Activated CD4-positive, alpha-beta memory T cell treated with anti-CD3 and anti-CD28 coated beads for 36 hours (primary cell): ENCODE measurements at regions of chr18 and their contacts with region 1.

Region 1: DNA sequence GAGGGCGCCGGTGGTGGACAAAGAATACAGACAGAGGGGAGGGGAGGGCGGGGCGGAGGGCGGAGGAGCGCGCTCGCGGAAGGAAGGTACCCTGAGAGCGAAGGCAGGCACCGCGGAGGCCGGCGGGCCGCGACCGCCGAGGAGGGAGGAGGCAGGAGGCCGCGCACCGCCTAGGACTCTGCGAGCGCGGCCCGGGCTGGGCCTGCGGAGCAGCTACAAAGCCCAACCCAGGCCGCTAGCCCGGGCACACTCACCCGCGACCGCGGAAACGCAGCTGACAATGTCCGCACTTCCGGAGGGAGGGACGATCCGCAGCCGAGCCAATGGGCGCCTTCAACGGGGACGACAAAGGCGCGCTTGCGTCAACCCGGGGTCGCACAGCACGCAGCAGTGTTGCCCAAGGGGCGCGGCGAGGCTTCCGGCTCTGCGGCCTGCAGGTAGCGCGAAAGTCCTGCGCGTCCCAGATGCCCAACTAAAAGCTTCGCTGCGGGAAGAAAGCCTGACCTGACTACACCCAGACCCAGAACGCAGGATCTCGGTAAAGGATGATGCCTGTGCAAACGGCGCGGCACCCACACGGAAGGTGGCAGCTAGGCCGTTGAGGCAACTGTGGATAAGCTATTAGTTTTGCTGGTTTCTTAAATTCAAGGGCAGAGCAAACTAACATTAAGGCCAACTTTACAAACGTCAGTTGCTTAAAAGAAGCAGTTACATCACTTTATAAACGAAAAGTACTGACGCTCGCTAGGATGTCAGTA is at the start of gene C18orf32:
- DNase-seq: peak; percentile 96
- H3K4me3 Mint-ChIP-seq: peak within 1 kb of the TSS; percentile 97
- H3K27ac Mint-ChIP-seq: peak within 1 kb of the TSS; percentile 97
- H3K4me1 Mint-ChIP-seq: peaks cover 59% of the 10 kb centered on the region
- H3K27me3 Mint-ChIP-seq: no peaks in the 10 kb centered on the region
- total RNA-seq, gene C18orf32: 26.5 to 27.5 TPM

Region 2: GRCh38 chr18:49274188-49274714 is 212.9 kb before region 1 on chr18:
- CTCF ChIA-PET with region 1: no interaction called
- POLR2A ChIA-PET with region 1: no interaction called
- intact Hi-C with region 1: no loop called
- DNase-seq: no peak
- H3K4me3 Mint-ChIP-seq: no peak overlapping the region
- H3K27ac Mint-ChIP-seq: no peak overlapping the region
- H3K4me1 Mint-ChIP-seq: no peaks in the 10 kb centered on the region
- H3K27me3 Mint-ChIP-seq: no peaks in the 10 kb centered on the region

Region 3: DNA sequence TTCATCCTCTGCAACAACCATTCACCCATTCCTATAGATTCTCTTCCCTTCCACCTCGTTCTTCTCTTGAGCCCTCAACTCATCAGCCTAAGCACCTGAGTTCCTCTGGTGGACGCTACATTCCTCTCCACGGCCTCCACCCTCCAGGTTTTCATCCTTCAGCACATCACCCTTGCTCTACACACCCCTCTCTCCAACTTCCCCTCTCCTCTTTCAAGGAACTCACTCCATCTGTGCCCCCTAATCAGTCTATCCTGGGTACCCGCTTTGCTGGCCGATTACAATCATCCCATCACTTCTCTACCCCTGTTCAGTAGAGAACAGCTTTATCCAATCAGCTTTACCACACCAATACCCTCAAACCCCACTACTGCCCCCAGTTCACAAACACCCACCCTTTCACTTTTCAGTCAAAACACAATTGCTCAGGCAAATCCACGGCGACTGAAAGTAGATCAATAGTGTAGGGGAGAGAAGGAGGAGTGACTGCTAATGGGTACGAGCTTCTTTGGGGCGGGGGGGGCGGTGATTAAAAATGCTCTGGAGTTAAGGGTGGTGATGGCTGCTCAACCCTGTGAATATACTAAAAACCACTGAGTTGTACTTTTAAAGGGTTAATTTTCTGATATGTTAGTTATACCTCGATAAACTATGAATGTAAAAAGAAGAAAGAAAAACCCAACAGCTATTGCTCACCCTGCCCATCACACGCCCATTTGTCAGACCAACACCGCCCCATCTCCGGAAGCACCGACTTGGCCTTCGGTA is 27.5 kb before region 1 on chr18:
- CTCF ChIA-PET with region 1: interaction called, 12 read pairs
- POLR2A ChIA-PET with region 1: interaction called, 13 read pairs
- intact Hi-C with region 1: loop called (anchors 1 kb)
- DNase-seq: peak; percentile 52
- H3K4me3 Mint-ChIP-seq: peak overlapping the region; percentile 71
- H3K27ac Mint-ChIP-seq: peak overlapping the region; percentile 29
- H3K4me1 Mint-ChIP-seq: peaks cover 43% of the 10 kb centered on the region
- H3K27me3 Mint-ChIP-seq: no peaks in the 10 kb centered on the region

Region 4: DNA sequence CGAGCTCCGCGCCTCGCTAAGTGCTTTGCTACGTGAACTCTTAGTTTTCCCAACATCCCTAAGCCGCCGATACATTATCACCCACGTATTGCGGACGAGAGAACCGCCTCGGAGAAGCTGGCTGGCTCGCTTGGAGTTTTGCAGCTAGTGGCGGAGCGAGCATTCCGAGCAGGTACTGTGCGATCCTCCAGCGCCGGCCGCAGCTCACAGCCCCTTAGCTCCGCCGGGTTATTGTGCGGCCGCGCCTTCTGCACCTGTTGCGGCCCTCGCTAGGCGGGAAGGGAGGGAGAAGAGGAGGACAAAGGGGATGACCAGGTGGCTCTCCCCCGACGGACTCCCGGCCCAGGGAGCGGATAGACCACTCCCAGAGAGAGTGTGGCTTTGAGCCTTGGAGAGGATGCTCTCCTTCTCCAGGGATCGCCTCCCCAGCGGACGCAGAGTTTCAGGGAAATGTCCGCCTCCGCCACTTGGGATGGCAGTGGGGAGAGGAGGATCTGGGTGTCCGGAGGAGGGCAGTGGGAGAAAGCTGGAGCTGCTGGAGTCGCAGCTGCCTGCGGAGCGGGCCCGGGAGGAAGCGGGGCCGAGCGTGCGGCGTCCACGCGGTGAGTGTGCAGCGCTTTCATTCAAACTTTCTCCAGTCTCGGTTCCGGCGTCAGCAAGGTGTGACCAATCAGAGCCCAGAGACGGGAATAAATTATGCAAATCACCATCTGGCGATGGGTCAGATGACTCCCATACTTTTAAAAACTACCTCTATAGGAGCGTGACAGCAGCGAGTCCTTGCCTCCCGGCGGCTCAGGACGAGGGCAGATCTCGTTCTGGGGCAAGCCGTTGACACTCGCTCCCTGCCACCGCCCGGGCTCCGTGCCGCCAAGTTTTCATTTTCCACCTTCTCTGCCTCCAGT is 74.4 kb after region 1 on chr18 and contains the start of gene LIPG:
- CTCF ChIA-PET with region 1: no interaction called
- POLR2A ChIA-PET with region 1: no interaction called
- intact Hi-C with region 1: loop called (anchors 2 kb)
- DNase-seq: peak; percentile 77
- H3K4me3 Mint-ChIP-seq: peak within 1 kb of the TSS; percentile 54
- H3K27ac Mint-ChIP-seq: no peak within 1 kb of the TSS
- H3K4me1 Mint-ChIP-seq: peaks cover 31% of the 10 kb centered on the region
- H3K27me3 Mint-ChIP-seq: peaks cover 62% of the 10 kb centered on the region
- total RNA-seq, gene LIPG: 0.17 to 0.50 TPM

Region 5: GRCh38 chr18:49813319-49814146 is 326.4 kb after region 1 on chr18 and contains the start of gene ACAA2:
- CTCF ChIA-PET with region 1: no interaction called
- POLR2A ChIA-PET with region 1: interaction called, 4 read pairs
- intact Hi-C with region 1: loop called (anchors 2 kb)
- DNase-seq: peak; percentile 90
- H3K4me3 Mint-ChIP-seq: peak within 1 kb of the TSS; percentile 91
- H3K27ac Mint-ChIP-seq: peak within 1 kb of the TSS; percentile 95
- H3K4me1 Mint-ChIP-seq: peaks cover 45% of the 10 kb centered on the region
- H3K27me3 Mint-ChIP-seq: no peaks in the 10 kb centered on the region
- total RNA-seq, gene ACAA2: 77.9 to 78.4 TPM

Region 6: GRCh38 chr18:50194631-50195532 is 707.8 kb after region 1 on chr18 and contains the start of gene MYO5B:
- CTCF ChIA-PET with region 1: no interaction called
- POLR2A ChIA-PET with region 1: no interaction called
- intact Hi-C with region 1: loop called (anchors 10 kb)
- DNase-seq: peak; percentile 63
- H3K4me3 Mint-ChIP-seq: no peak within 1 kb of the TSS
- H3K27ac Mint-ChIP-seq: no peak within 1 kb of the TSS
- H3K4me1 Mint-ChIP-seq: peaks cover 17% of the 10 kb centered on the region
- H3K27me3 Mint-ChIP-seq: peaks cover 51% of the 10 kb centered on the region
- total RNA-seq, gene MYO5B: 0.02 to 0.21 TPM